ENCODE measurements at regions of chr22 and their contacts with region 1.

Region 1: GRCh38 chr22:41237707-41238569 is 2.8 kb downstream of the CHADL start:
- DNase-seq: peak; percentile 93
- ATAC-seq: peak; percentile 47
- H3K4me3 Mint-ChIP-seq: peak overlapping the region; percentile 63; the same call in 1 of the 2 replicates
- H3K27ac Mint-ChIP-seq: no peak overlapping the region
- H3K4me1 Mint-ChIP-seq: peaks cover 16% of the 10 kb centered on the region
- H3K27me3 Mint-ChIP-seq: no peaks in the 10 kb centered on the region; the same call in none of the 2 replicates
- CTCF ChIP-seq: no peak

Region 2: DNA sequence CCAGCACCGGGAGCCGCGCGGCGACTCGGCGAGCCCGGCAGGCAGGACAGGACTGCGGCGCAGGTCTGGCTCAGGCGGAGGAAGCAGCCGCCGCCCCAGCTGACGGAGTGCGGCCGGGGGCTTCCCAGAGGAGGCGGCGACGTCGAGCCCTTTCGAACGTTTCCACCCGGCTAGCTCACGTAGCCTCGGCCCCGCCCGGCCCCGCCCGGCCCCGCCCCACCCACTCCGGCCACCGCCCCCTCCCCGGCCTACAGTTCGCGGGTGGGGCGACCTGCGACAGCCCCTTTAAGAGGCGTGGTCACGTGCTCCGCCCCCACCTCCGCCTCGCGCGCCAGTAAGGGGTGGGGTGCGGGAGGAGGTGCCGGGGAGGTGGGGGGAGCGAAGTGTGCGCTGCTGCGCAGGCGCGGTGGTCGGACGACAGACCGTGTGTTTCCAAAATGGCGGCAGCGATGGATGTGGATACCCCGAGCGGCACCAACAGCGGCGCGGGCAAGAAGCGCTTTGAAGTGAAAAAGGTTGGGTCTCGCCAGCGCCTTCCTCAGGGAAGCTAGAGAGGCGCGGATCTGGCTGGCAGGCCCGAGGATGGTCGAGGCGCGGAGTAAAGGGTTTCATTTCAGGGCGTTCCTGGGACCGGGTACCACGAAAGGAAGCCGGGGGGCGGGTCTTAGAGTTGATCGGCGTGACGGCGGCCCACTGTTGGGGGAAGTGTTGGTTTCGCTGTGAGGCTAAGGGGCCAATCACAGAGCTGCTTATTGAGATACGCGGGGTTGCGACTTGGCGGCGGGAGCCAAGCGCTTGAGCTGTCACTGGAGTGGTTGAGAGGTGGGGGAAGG is 286.8 kb before region 1 on chr22 and contains the start of gene RBX1:
- CTCF ChIA-PET with region 1: interaction called, 22 read pairs
- POLR2A ChIA-PET with region 1: interaction called, 7 read pairs
- DNase-seq: peak; percentile 98
- ATAC-seq: peak; percentile 87
- H3K4me3 Mint-ChIP-seq: peak within 1 kb of the TSS; percentile 100
- H3K27ac Mint-ChIP-seq: peak within 1 kb of the TSS; percentile 99
- H3K4me1 Mint-ChIP-seq: peaks cover 11% of the 10 kb centered on the region
- H3K27me3 Mint-ChIP-seq: no peaks in the 10 kb centered on the region; the same call in 1 of the 2 replicates
- CTCF ChIP-seq: no peak
- total RNA-seq, gene RBX1: 68.2 to 70.8 TPM (median 70.3 TPM) in 3 replicates

Region 3: GRCh38 chr22:41181349-41182241 is 56.3 kb before region 1 on chr22:
- CTCF ChIA-PET with region 1: interaction called, 60 read pairs
- POLR2A ChIA-PET with region 1: interaction called, 7 read pairs
- DNase-seq: no peak
- ATAC-seq: peak; percentile 21
- H3K4me3 Mint-ChIP-seq: no peak overlapping the region
- H3K27ac Mint-ChIP-seq: peak overlapping the region; percentile 79
- H3K4me1 Mint-ChIP-seq: peaks cover 36% of the 10 kb centered on the region
- H3K27me3 Mint-ChIP-seq: no peaks in the 10 kb centered on the region
- CTCF ChIP-seq: no peak

Region 4: GRCh38 chr22:41197038-41197972 is 40.6 kb before region 1 on chr22:
- CTCF ChIA-PET with region 1: interaction called, 50 read pairs
- POLR2A ChIA-PET with region 1: interaction called, 5 read pairs
- DNase-seq: peak; percentile 86
- ATAC-seq: peak; percentile 90
- H3K4me3 Mint-ChIP-seq: peak overlapping the region; percentile 81
- H3K27ac Mint-ChIP-seq: no peak overlapping the region
- H3K4me1 Mint-ChIP-seq: peaks cover 9% of the 10 kb centered on the region
- H3K27me3 Mint-ChIP-seq: peaks cover 59% of the 10 kb centered on the region
- CTCF ChIP-seq: no peak

Region 5: GRCh38 chr22:41217553-41218157 is 20.3 kb before region 1 on chr22:
- CTCF ChIA-PET with region 1: interaction called, 17 read pairs
- POLR2A ChIA-PET with region 1: interaction called, 5 read pairs
- DNase-seq: peak; percentile 52
- ATAC-seq: peak; percentile 85
- H3K4me3 Mint-ChIP-seq: no peak overlapping the region
- H3K27ac Mint-ChIP-seq: peak overlapping the region; percentile 90
- H3K4me1 Mint-ChIP-seq: peaks cover 19% of the 10 kb centered on the region
- H3K27me3 Mint-ChIP-seq: no peaks in the 10 kb centered on the region
- CTCF ChIP-seq: no peak